Common myeloid progenitor, CD34-positive (primary cell): ENCODE measurements at regions of chr6 and their contacts with region 1.

Region 1: DNA sequence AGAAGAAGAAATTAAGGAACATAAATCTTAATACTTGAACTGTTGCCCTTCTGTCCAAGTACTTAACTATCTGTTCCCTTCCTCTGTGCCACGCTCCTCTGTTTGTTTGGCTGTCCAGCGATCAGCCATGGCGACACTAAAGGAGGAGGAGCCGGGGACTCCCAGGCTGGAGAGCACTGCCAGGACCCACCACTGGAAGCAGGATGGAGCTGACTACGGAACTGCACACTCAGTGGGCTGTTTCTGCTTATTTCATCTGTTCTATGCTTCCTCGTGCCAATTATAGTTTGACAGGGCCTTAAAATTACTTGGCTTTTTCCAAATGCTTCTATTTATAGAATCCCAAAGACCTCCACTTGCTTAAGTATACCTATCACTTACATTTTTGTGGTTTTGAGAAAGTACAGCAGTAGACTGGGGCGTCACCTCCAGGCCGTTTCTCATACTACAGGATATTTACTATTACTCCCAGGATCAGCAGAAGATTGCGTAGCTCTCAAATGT is 17.1 kb downstream of the IRF4 start:
- DNase-seq: peak; percentile 60 to 79 (median 76)
- H3K4me3 ChIP-seq: peak overlapping the region in 1 of 7 experiments; percentile 31
- H3K27ac ChIP-seq: no peak overlapping the region
- H3K4me1 ChIP-seq: peaks cover 0 to 7% (median 5%) of the 10 kb centered on the region in 4 experiments
- H3K27me3 ChIP-seq: peaks cover 0 to 11% (median 0%) of the 10 kb centered on the region in 5 experiments

Region 2: GRCh38 chr6:188821-189655 is 219.6 kb before region 1 on chr6:
- CTCF ChIA-PET with region 1: interaction called, 114 read pairs
- POLR2A ChIA-PET with region 1: interaction called, 5 read pairs
- DNase-seq: peak; percentile 71 to 85 (median 79)
- H3K4me3 ChIP-seq: no peak overlapping the region
- H3K27ac ChIP-seq: no peak overlapping the region
- H3K4me1 ChIP-seq: peaks cover 2 to 19% (median 7%) of the 10 kb centered on the region in 4 experiments
- H3K27me3 ChIP-seq: no peaks in the 10 kb centered on the region

Region 3: DNA sequence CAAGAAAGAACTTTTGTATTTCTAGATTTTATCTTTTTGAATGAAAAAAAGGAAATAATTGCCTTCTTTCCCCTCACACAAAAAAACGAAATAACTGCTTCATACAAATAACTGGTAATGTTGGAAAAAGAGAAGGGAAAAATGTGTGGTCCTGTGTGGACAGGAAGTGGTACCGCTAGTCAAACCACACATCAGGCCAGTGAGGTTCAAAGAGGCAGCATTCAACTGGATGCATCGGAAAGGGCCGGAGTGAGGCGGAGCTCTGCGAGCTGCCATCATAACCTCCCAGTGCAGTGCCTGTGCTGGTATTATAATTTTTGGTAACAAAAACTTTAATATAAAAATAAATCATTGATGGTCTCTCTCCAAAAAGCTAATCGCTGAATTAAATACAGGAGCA is 94.1 kb after region 1 on chr6:
- CTCF ChIA-PET with region 1: interaction called, 4 read pairs
- POLR2A ChIA-PET with region 1: interaction called, 11 read pairs
- DNase-seq: no peak
- H3K4me3 ChIP-seq: no peak overlapping the region
- H3K27ac ChIP-seq: no peak overlapping the region
- H3K4me1 ChIP-seq: peaks cover 5 to 16% (median 10%) of the 10 kb centered on the region in 4 experiments
- H3K27me3 ChIP-seq: no peaks in the 10 kb centered on the region